ENCODE measurements at regions of chr6 and their contacts with region 1.

Region 1: GRCh38 chr6:56618050-56618449 is 24.6 kb downstream of the DST start:
- DNase-seq: peak; percentile 33

Region 2: DNA sequence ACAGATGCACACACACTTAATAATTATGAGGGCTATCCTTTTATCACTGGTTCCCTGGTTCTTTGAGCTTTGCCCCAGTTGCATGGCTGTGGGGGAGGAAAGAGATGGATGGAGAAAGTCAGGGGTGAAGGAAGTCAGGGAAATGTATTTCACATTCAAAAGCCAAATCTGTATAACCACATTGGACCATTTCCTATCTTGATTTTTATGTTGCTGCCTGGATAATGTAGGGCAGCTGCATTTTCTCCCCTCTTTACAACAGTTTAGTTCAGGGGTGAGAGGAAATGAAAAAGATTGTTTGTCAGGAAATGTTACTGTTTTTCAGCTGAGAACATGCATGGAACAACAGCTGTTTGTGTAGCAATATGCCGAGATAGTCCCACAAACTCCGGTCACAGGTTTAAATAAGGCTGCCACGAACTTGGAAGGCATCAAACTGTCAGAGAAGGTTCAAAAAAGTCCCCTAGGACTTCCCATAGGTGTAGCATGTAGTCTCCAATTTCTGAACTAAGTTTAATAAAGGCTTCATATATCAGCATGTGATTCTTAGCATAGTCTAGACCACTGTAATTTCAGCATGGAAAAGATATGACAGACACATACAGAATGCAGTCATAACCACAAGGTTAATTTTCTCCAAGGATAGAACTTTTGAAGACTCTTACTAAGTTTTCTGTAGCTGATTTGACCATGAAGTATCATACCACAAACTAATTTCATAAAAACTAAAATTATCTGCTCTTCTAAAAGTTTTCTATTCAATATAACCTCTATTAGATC is 288.6 kb before region 1 on chr6:
- in situ Hi-C with region 1: no loop called
- DNase-seq: no peak

Region 3: GRCh38 chr6:56359201-56359899 is 258.7 kb before region 1 on chr6:
- in situ Hi-C with region 1: loop called (anchors 25 kb)
- DNase-seq: peak; percentile 80

Region 4: GRCh38 chr6:56381840-56382251 is 236.2 kb before region 1 on chr6:
- in situ Hi-C with region 1: no loop called
- DNase-seq: peak; percentile 97